Activated B cell treated with CpG ODN at 0.5 μM for 24 hours (primary cell): ENCODE measurements at regions of chr7 and their contacts with region 1.

Region 1: DNA sequence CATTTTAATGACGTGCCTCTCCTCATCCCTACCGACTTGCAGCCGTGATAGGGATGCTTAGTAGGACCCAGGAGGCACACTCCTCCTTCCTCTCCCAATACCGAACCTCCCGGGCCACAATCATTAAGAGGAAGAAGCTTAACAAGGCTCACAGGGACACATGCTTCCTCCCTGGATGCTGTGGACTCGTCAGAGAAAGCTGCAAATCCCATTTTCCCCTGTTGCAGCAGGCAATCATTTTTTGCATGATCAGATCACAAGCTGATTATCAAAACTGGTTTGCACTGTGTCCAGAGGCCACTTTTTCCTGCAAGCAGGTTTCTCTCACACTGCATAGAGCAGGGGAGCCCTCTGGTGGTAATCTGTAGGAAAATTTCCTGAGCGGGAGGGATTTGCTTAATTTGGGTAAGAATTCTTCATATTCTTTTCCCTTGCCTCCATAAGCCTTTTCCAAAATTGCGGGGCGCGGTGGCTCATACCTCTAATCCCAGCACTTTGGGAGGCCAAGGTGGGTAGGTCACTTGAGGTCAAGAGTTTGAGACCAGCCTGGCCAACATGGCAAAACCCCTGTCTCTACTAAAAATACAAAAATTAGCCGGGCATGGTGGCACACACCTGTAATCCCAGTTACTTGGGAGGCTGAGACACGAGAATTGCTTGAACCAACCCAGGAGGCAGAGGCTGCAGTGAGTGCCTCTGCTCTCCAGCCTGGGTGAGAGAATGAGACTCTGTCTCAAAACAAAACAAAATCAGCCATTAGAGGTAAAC is 16.1 kb upstream of the LAMB4 start:
- DNase-seq: no peak
- ATAC-seq: peak; percentile 67
- H3K4me3 Mint-ChIP-seq: no peak overlapping the region
- H3K27ac Mint-ChIP-seq: no peak overlapping the region
- H3K4me1 Mint-ChIP-seq: no peaks in the 10 kb centered on the region
- H3K27me3 Mint-ChIP-seq: peaks cover 7% of the 10 kb centered on the region
- CTCF ChIP-seq: peak; percentile 94

Region 2: GRCh38 chr7:107462740-107463444 is 683.4 kb before region 1 on chr7:
- CTCF ChIA-PET with region 1: interaction called, 4 read pairs
- POLR2A ChIA-PET with region 1: no interaction called
- intact Hi-C with region 1: loop called (anchors 5 kb)
- DNase-seq: no peak
- ATAC-seq: peak; percentile 75
- H3K4me3 Mint-ChIP-seq: no peak overlapping the region
- H3K27ac Mint-ChIP-seq: no peak overlapping the region
- H3K4me1 Mint-ChIP-seq: no peaks in the 10 kb centered on the region
- H3K27me3 Mint-ChIP-seq: no peaks in the 10 kb centered on the region
- CTCF ChIP-seq: no peak

Region 3: DNA sequence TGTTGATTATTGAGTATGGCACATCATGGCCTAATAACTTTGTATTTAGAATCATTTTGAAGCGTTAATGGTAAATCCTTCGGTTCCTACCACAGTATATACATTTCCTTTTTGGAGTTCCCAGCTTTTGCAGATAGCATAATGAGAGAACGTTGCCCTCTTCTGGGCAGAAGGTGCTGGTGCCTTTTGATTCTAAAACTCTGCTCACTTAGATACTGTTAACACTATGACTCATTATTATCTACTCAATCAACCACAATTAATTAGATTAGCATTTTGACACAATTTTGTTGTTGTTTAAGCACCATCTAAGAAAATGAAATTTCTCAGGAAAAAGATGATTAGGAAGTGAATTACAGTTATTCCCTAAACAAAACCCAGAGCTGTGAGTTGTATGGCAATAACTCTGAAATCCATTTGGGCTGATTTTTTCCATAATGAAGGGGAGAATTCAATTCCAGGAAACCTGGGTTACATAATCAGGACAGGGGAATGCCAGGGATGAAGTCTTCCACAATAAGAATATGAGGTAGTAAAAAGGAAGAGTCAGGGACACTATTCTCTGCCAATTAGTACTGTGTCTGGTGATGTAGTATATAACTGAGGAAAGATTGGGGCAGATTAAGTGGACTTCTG is 266.7 kb before region 1 on chr7:
- CTCF ChIA-PET with region 1: interaction called, 5 read pairs
- POLR2A ChIA-PET with region 1: no interaction called
- intact Hi-C with region 1: loop called (anchors 1 kb)
- DNase-seq: no peak
- ATAC-seq: peak; percentile 74
- H3K4me3 Mint-ChIP-seq: no peak overlapping the region
- H3K27ac Mint-ChIP-seq: no peak overlapping the region
- H3K4me1 Mint-ChIP-seq: peaks cover under 1% of the 10 kb centered on the region
- H3K27me3 Mint-ChIP-seq: peaks cover 20% of the 10 kb centered on the region
- CTCF ChIP-seq: no peak

Region 4: GRCh38 chr7:107924841-107925504 is 221.3 kb before region 1 on chr7:
- CTCF ChIA-PET with region 1: no interaction called
- POLR2A ChIA-PET with region 1: no interaction called
- intact Hi-C with region 1: loop called (anchors 10 kb)
- DNase-seq: no peak
- ATAC-seq: no peak
- H3K4me3 Mint-ChIP-seq: no peak overlapping the region
- H3K27ac Mint-ChIP-seq: no peak overlapping the region
- H3K4me1 Mint-ChIP-seq: peaks cover 16% of the 10 kb centered on the region
- H3K27me3 Mint-ChIP-seq: no peaks in the 10 kb centered on the region
- CTCF ChIP-seq: no peak

Region 5: GRCh38 chr7:108002726-108003598 is 143.3 kb before region 1 on chr7 and contains the start of gene LAMB1:
- CTCF ChIA-PET with region 1: no interaction called
- POLR2A ChIA-PET with region 1: no interaction called
- intact Hi-C with region 1: loop called (anchors 10 kb)
- DNase-seq: no peak
- ATAC-seq: no peak
- H3K4me3 Mint-ChIP-seq: peak within 1 kb of the TSS; percentile 73
- H3K27ac Mint-ChIP-seq: no peak within 1 kb of the TSS
- H3K4me1 Mint-ChIP-seq: peaks cover 21% of the 10 kb centered on the region
- H3K27me3 Mint-ChIP-seq: peaks cover 57% of the 10 kb centered on the region
- CTCF ChIP-seq: no peak
- total RNA-seq, gene LAMB1: not detected in 2 replicates

Region 6: DNA sequence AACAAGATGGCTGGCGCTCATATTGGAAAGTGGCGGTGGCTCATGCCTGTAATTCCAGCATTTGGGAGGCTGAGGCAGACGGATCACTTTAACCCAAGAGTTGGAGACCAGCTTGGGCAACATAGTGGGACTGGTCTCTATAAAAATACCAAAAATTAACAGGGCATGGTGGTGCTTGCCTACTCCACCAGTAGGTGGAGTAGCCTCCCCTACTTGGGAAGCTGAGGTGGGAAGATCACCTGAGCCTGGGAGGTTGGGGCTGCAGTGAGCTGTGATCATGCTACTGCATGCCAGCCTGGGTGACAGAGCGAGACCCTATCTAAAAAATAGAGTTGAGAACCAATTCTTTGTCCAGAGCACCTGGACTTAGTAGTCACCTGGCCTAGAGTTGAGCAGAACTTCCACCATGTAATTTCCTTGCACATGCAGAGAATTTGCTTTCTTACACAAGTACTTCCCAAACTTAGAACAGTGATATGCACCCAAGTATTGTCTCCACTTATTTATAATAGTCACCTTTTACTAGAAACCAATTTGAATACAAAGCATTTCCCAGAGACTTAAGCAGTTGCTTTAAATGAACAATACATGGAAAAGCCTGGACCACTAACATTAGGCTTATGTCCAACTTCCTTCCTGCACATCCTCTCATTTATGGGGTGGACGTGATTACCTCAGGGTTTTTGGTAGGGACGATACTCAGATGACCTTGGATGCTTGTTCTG is 32.0 kb before region 1 on chr7:
- CTCF ChIA-PET with region 1: interaction called, 86 read pairs
- POLR2A ChIA-PET with region 1: interaction called, 4 read pairs
- intact Hi-C with region 1: loop called (anchors 1 kb)
- DNase-seq: no peak
- ATAC-seq: peak; percentile 74
- H3K4me3 Mint-ChIP-seq: no peak overlapping the region
- H3K27ac Mint-ChIP-seq: no peak overlapping the region
- H3K4me1 Mint-ChIP-seq: no peaks in the 10 kb centered on the region
- H3K27me3 Mint-ChIP-seq: no peaks in the 10 kb centered on the region
- CTCF ChIP-seq: no peak

Region 7: DNA sequence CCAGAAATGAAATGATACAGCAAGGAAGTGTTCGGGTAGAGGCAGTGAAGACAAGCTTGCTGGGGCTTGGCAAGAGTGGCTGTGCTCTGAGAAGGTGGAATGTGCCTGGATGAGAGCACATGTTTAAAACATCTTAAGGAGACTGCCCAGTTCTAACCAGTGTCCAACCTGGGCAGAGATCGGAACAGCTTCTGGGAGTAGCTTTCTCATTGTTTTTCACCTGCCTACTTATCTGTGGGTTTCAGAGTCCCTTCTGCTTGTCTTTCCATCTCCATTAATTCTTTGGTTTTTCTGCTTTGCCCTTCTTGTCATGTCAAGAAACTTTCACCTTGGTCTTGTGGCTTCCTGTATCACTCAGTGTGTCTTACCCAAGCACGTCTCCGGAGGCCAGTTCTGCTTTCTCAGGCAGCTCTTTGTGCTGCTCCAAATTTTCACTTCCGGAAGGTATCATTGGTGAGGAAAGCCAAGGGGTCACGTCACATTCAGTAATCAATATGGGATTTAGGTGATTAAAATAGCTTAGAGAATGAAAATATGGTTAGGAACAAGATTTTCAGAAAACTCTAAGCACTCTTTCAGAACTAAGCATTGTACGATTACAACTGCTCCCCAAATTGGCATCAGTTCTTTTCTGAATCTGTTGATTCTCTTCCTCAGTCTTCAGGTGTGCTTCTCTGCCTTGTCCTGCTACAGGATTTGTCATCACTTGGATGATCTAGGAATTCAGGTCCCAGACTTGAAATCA is 10.6 kb before region 1 on chr7:
- CTCF ChIA-PET with region 1: interaction called, 34 read pairs
- POLR2A ChIA-PET with region 1: no interaction called
- intact Hi-C with region 1: no loop called
- DNase-seq: no peak
- ATAC-seq: peak; percentile 95
- H3K4me3 Mint-ChIP-seq: peak overlapping the region; percentile 52
- H3K27ac Mint-ChIP-seq: peak overlapping the region; percentile 87
- H3K4me1 Mint-ChIP-seq: peaks cover 30% of the 10 kb centered on the region
- H3K27me3 Mint-ChIP-seq: no peaks in the 10 kb centered on the region
- CTCF ChIP-seq: no peak